A549 (cell line): ENCODE measurements at regions of chr16 and their contacts with region 1.

Region 1: DNA sequence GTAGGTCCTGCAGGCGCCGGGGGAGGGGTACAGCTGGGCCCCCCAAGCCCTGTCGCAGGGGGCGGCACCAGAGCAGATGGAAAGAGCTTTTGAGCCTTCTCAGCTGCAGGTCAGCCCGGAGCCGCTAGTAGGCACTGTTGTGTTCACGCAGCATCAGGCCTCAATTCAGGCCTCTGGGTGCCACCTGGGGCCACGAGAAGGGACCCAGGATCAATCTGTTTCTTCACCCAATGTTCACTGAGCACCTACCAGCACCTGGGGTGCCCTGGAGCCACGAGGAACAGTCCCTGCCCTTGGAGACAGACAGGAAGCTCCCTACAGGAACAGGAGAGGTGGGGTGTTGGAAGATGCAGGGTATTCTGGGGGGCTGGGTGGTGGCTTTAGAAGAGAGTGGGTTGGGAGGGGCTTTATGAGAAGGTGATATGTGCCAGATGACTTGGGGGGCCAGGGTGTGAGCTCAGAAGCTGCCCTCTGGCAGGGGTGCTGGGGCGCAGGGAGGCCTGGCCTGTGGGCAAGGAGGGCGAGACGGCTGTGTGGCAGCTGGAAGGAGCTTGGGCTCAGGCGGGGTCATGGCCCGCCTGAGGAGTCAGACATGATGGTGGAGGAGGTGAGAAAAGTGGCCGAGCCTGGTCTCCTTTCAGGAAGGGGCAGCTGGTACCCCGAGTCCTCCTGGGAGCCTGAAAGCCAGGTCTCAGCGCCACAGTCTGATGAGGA is 121.9 kb upstream of the GSE1 start:
- DNase-seq: peak; percentile 52 to 63
- ATAC-seq: peak; percentile 37 to 82; a peak in 3 of 6 replicates
- H3K4me3 ChIP-seq: no peak overlapping the region
- H3K27ac ChIP-seq: peak overlapping the region; percentile 32 to 71; a peak in 5 of 6 replicates
- H3K4me1 ChIP-seq: peaks cover 15% of the 10 kb centered on the region
- CTCF ChIP-seq: peak; percentile 84
- EP300 ChIP-seq: no peak
- POLR2A ChIP-seq: no peak
- RAD21 ChIP-seq: peak; percentile 59 to 69

Region 2: DNA sequence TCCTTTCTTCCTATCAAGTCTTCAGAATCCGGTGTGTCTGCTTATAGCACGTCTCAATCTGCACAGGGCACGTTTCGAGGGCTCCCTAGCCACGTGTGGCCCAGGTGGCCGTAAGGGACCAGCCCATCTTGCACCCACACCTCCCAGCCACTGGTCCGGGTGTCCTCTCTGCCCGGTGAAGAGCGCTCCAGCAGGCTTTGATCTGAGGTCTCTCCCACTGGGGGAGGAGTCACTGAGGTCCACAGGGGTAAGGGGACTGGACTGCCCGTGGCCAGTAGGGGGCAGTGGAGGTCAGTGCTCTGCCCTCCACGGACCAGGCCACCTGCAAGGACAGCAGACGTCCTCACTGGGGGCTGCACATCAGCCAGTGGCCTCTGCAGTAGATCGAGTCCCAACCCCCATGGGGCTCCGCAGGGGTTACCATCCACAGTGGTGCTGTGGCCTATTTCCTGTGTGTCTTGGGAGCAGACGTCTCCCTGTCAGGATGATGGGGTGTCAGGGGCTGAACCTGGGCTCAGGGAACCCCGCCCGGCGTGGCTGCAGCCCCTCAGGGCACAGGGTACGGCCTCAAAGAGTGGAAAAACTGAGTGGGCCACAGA is 174.8 kb before region 1 on chr16:
- CTCF ChIA-PET with region 1: no interaction called
- POLR2A ChIA-PET with region 1: no interaction called
- DNase-seq: peak; percentile 76 to 79
- ATAC-seq: peak; percentile 85 to 98
- H3K4me3 ChIP-seq: no peak overlapping the region
- H3K27ac ChIP-seq: no peak overlapping the region
- H3K4me1 ChIP-seq: 0 out of 3 replicates have a peak, but pooled peaks cover under 1% of the 10 kb centered on the region
- CTCF ChIP-seq: peak; percentile 78
- EP300 ChIP-seq: no peak
- POLR2A ChIP-seq: no peak
- RAD21 ChIP-seq: peak; percentile 65 to 66

Region 3: GRCh38 chr16:85473909-85474620 is 17.1 kb before region 1 on chr16:
- CTCF ChIA-PET with region 1: interaction called, 96 read pairs
- POLR2A ChIA-PET with region 1: no interaction called
- DNase-seq: no peak
- ATAC-seq: peak; percentile 57 to 75
- H3K4me3 ChIP-seq: no peak overlapping the region
- H3K27ac ChIP-seq: no peak overlapping the region
- H3K4me1 ChIP-seq: no peaks in the 10 kb centered on the region
- CTCF ChIP-seq: no peak
- EP300 ChIP-seq: no peak
- POLR2A ChIP-seq: no peak
- RAD21 ChIP-seq: no peak

Region 4: GRCh38 chr16:85505794-85506633 is 14.8 kb after region 1 on chr16:
- CTCF ChIA-PET with region 1: interaction called, 61 read pairs
- POLR2A ChIA-PET with region 1: no interaction called
- DNase-seq: no peak
- ATAC-seq: no peak
- H3K4me3 ChIP-seq: no peak overlapping the region
- H3K27ac ChIP-seq: no peak overlapping the region
- H3K4me1 ChIP-seq: no peaks in the 10 kb centered on the region
- CTCF ChIP-seq: no peak
- EP300 ChIP-seq: no peak
- POLR2A ChIP-seq: no peak
- RAD21 ChIP-seq: no peak

Region 5: GRCh38 chr16:85528528-85529387 is 37.5 kb after region 1 on chr16:
- CTCF ChIA-PET with region 1: interaction called, 15 read pairs
- POLR2A ChIA-PET with region 1: no interaction called
- DNase-seq: peak; percentile 26 to 60
- ATAC-seq: peak in 1 of 2 experiments; percentile 60; a peak in 3 of 6 replicates
- H3K4me3 ChIP-seq: no peak overlapping the region
- H3K27ac ChIP-seq: 0 out of 6 replicates have a peak overlapping the region, but pooled peaks of 1 of the 2 experiments have one; percentile 15
- H3K4me1 ChIP-seq: peaks cover 21% of the 10 kb centered on the region
- CTCF ChIP-seq: peak; percentile 36; the same call in 2 of the 3 replicates
- EP300 ChIP-seq: no peak
- POLR2A ChIP-seq: no peak
- RAD21 ChIP-seq: no peak

Region 6: GRCh38 chr16:85947230-85948137 is 456.3 kb after region 1 on chr16:
- CTCF ChIA-PET with region 1: no interaction called
- POLR2A ChIA-PET with region 1: no interaction called
- DNase-seq: no peak
- ATAC-seq: no peak; a peak in 1 of 6 replicates
- H3K4me3 ChIP-seq: 0 out of 3 replicates have a peak overlapping the region, but pooled peaks have one; percentile 10
- H3K27ac ChIP-seq: no peak overlapping the region
- H3K4me1 ChIP-seq: no peaks in the 10 kb centered on the region
- CTCF ChIP-seq: no peak
- EP300 ChIP-seq: no peak
- POLR2A ChIP-seq: no peak
- RAD21 ChIP-seq: no peak